Activated CD4-positive, alpha-beta memory T cell treated with anti-CD3 and anti-CD28 coated beads for 36 hours (primary cell): ENCODE measurements at regions of chr16 and their contacts with region 1.

Region 1: DNA sequence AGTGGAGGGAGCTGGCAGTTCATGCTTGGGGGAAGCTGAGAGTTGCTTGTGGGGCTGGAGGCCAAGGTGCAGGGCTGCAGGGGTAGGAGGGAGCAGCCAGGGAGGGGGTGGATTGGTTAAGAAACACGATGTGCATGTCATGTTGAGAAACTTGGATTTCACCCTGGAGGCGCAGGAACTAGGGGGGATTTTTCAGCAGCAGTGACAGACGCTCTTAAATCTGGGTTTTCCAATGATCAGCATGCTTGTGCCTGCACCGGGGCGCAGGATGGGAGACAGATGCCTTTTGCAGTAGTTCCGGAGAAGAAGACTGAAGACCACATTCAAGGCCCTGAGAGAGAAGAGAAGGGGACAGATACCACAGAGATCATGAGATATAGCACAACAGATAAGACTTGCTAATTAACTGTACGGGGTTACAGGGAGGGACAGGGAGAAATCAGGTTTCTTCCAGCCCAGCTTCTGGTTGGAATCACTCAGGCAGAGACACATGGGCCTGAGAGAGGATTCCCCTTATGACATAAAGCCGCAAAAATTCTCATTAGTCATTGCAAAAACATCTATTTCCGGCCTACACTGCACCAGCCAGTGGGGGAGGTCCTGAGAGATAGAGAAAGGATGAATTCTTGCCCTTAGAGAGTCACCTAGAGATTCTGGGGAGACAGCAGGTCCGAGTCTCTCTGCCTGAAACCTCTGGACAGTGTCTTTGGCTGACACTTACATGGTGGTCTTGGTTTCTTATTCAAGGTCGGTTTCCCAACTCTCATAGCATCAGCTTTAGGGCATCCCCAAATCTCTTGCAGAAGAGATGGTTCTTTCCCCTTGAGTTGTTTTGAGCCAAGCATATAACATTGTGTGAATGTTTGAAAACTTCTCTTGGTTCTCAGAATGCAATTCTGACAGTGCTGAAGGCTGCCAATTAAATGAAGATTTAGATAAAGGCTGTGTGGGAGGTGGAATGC is 27.1 kb downstream of the CDH13 start:
- DNase-seq: peak; percentile 69
- H3K4me3 Mint-ChIP-seq: peak overlapping the region; percentile 33
- H3K27ac Mint-ChIP-seq: peak overlapping the region; percentile 81
- H3K4me1 Mint-ChIP-seq: peaks cover 86% of the 10 kb centered on the region
- H3K27me3 Mint-ChIP-seq: no peaks in the 10 kb centered on the region

Region 2: GRCh38 chr16:81006814-81007696 is 1646.8 kb before region 1 on chr16 and contains the starts of genes CENPN and CMC2:
- CTCF ChIA-PET with region 1: no interaction called
- POLR2A ChIA-PET with region 1: no interaction called
- intact Hi-C with region 1: loop called (anchors 10 kb)
- DNase-seq: peak; percentile 98
- H3K4me3 Mint-ChIP-seq: peak within 1 kb of the TSS; percentile 88
- H3K27ac Mint-ChIP-seq: peak within 1 kb of the TSS; percentile 98
- H3K4me1 Mint-ChIP-seq: peaks cover 41% of the 10 kb centered on the region
- H3K27me3 Mint-ChIP-seq: no peaks in the 10 kb centered on the region
- total RNA-seq, gene CENPN: 71.9 to 76.0 TPM
- total RNA-seq, gene CMC2: 147 to 148 TPM

Region 3: GRCh38 chr16:82639666-82640336 is 14.0 kb before region 1 on chr16:
- CTCF ChIA-PET with region 1: interaction called, 11 read pairs
- POLR2A ChIA-PET with region 1: interaction called, 4 read pairs
- intact Hi-C with region 1: loop called (anchors 1 kb)
- DNase-seq: peak; percentile 62
- H3K4me3 Mint-ChIP-seq: no peak overlapping the region
- H3K27ac Mint-ChIP-seq: no peak overlapping the region
- H3K4me1 Mint-ChIP-seq: peaks cover 12% of the 10 kb centered on the region
- H3K27me3 Mint-ChIP-seq: no peaks in the 10 kb centered on the region

Region 4: GRCh38 chr16:82671741-82672140 is 17.9 kb after region 1 on chr16:
- CTCF ChIA-PET with region 1: interaction called, 14 read pairs
- POLR2A ChIA-PET with region 1: interaction called, 3 read pairs
- intact Hi-C with region 1: loop called (anchors 1 kb)
- DNase-seq: peak; percentile 54
- H3K4me3 Mint-ChIP-seq: no peak overlapping the region
- H3K27ac Mint-ChIP-seq: no peak overlapping the region
- H3K4me1 Mint-ChIP-seq: no peaks in the 10 kb centered on the region
- H3K27me3 Mint-ChIP-seq: no peaks in the 10 kb centered on the region

Region 5: DNA sequence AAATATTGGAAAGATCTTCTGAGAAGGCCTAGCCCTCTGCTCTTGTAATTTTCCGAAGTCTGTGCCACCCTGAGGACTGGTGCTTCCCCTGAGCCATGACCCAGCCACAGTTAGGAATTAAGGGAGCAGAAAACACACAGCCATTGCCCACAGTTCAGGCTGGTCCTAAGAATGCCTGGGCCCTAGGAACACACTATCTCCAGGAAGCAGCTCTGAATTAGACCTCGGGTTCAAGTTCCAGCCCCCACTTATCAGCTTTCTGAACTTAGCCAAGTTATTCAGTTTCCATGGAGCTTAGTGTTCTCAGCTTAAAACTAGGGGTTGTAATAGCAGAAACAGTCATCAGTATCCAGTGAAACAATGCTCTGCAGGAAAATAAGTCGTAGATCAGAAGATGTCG is 28.9 kb after region 1 on chr16:
- CTCF ChIA-PET with region 1: no interaction called
- POLR2A ChIA-PET with region 1: no interaction called
- intact Hi-C with region 1: no loop called
- DNase-seq: no peak
- H3K4me3 Mint-ChIP-seq: no peak overlapping the region
- H3K27ac Mint-ChIP-seq: no peak overlapping the region
- H3K4me1 Mint-ChIP-seq: no peaks in the 10 kb centered on the region
- H3K27me3 Mint-ChIP-seq: no peaks in the 10 kb centered on the region

Region 6: DNA sequence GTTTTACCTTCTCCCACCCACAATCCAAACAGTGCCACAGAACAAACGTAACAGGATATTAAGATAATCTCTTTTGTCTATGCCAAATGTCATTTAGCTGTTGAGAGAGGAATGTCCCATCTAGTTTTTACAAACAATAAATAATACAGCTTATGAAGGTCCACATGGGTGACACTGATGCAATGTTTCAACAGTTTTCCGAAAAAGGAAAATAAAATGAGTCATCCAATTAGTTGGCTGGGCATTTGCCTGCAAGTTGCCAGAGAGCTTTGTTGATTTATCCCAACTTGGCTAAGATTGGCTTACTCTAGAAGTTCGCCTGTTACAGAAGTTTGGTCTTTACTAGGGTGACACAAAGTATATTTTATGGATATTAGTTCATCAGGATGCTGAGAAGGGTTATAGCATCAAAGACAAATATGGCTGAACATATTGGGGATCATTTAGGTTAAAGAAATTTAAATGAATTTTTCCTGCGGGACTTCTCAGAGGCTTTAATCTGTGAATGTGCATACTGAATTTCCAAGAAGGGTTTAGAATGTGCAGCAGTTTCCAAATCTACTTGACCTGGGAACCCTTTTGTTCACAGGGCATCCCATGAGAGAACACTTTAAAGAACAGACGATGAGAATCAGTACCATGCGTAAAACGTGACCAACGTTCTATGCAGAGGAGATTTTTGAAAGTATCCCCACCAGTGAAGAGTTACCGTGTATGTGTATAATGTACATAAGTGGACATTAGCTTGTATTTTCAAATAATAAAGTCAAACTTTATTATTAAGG is 46.1 kb after region 1 on chr16:
- CTCF ChIA-PET with region 1: interaction called, 4 read pairs
- POLR2A ChIA-PET with region 1: no interaction called
- intact Hi-C with region 1: loop called (anchors 2 kb)
- DNase-seq: no peak
- H3K4me3 Mint-ChIP-seq: no peak overlapping the region
- H3K27ac Mint-ChIP-seq: no peak overlapping the region
- H3K4me1 Mint-ChIP-seq: peaks cover 11% of the 10 kb centered on the region
- H3K27me3 Mint-ChIP-seq: peaks cover 1% of the 10 kb centered on the region

Region 7: DNA sequence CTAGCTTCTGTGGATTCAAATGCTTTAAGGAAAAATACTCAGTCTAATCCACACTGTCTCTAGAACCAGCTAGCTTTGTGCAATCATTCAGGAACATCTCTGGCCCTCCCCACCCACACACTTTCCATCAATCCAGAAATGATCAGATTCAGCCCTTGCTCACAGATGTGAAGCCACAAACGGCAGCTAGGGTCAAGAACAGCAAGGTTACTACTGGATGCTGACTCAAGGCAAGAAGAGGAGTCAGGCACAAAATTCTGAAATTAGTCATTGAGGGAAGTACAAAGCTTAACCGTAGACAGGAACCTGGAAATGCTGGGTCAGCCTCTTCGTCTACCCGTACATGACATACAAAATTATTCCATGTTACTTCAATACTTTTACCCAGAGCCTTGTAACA is 147.5 kb after region 1 on chr16:
- CTCF ChIA-PET with region 1: no interaction called
- POLR2A ChIA-PET with region 1: no interaction called
- intact Hi-C with region 1: loop called (anchors 1 kb)
- DNase-seq: peak; percentile 53
- H3K4me3 Mint-ChIP-seq: no peak overlapping the region
- H3K27ac Mint-ChIP-seq: no peak overlapping the region
- H3K4me1 Mint-ChIP-seq: peaks cover 11% of the 10 kb centered on the region
- H3K27me3 Mint-ChIP-seq: peaks cover 5% of the 10 kb centered on the region

Region 8: DNA sequence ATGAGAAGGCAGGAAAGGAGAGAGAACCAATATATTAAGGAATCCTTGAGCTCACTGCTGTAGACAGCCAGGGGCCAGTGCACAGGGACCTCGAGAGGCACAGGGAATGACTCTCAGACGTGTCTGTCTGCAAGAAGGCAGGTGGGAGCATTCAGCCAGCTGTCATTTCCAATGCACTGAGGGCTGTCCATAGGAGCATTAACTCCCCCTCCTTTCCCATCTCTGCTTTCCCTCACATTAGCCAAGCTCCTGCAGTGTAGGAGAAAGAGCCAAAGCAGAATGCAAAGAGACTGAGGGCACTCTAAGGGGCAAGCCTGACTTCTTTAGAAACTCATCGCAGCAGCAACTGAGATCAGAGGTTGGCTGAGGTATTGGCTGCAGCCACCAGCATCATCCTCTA is 191.3 kb after region 1 on chr16:
- CTCF ChIA-PET with region 1: no interaction called
- POLR2A ChIA-PET with region 1: no interaction called
- intact Hi-C with region 1: no loop called
- DNase-seq: no peak
- H3K4me3 Mint-ChIP-seq: no peak overlapping the region
- H3K27ac Mint-ChIP-seq: no peak overlapping the region
- H3K4me1 Mint-ChIP-seq: no peaks in the 10 kb centered on the region
- H3K27me3 Mint-ChIP-seq: peaks cover 2% of the 10 kb centered on the region